HEK293 (cell line): ENCODE measurements at regions of chr17 and their contacts with region 1.

Region 1: GRCh38 chr17:8409966-8410864 is 12.6 kb upstream of the RNF222 start:
- H3K4me3 ChIP-seq: no peak overlapping the region
- H3K27ac ChIP-seq: no peak overlapping the region
- H3K4me1 ChIP-seq: no peaks in the 10 kb centered on the region
- CTCF ChIP-seq: peak; percentile 71

Region 2: DNA sequence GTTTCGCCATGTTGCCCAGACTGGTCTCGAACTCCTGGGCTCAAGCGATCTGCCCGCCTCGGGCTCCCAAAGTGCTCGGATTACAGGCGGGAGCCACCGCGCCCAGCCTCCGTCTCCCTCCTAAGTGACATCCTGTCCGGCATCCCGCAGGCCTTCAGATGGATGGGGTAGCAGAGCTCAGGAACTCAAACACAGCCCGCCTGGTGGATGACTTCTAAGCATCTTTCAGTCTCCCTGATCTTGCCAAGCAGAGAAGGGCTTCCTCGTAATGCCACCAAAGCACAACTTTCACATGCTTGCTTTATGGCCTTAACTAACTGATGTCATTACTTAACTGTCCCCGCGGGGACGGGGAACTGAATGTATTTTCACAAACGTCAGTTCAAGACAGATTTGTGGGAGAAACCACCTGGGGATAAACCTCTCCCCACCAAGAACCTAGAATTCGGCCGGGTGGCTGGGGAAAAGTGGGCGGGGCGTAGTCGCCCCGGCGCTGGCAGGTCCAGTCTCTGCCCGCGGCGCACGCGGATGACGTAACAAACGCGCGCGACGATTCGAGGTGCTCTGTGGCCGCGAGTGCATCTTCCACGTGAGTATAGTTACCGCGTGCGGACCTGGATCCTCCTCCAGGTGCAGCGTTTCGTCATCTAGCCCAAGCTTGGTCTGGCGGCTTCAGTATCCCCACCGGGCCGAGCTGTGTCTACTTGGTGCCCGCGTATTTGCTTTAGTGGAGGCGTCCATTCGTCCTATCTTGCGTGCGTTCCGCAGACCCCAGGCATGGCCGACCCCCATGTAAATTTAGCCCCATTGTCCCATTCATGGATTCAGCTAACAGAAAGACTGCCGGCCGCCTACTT is 161.2 kb before region 1 on chr17 and contains the start of gene PFAS:
- CTCF ChIA-PET with region 1: no interaction called
- POLR2A ChIA-PET with region 1: no interaction called
- H3K4me3 ChIP-seq: peak within 1 kb of the TSS; percentile 77
- H3K27ac ChIP-seq: peak within 1 kb of the TSS; percentile 91
- H3K4me1 ChIP-seq: peaks cover 6% of the 10 kb centered on the region
- CTCF ChIP-seq: no peak

Region 3: GRCh38 chr17:8393420-8394241 is 16.6 kb before region 1 on chr17:
- CTCF ChIA-PET with region 1: interaction called, 12 read pairs
- POLR2A ChIA-PET with region 1: no interaction called
- H3K4me3 ChIP-seq: no peak overlapping the region
- H3K27ac ChIP-seq: no peak overlapping the region
- H3K4me1 ChIP-seq: no peaks in the 10 kb centered on the region
- CTCF ChIP-seq: no peak

Region 4: DNA sequence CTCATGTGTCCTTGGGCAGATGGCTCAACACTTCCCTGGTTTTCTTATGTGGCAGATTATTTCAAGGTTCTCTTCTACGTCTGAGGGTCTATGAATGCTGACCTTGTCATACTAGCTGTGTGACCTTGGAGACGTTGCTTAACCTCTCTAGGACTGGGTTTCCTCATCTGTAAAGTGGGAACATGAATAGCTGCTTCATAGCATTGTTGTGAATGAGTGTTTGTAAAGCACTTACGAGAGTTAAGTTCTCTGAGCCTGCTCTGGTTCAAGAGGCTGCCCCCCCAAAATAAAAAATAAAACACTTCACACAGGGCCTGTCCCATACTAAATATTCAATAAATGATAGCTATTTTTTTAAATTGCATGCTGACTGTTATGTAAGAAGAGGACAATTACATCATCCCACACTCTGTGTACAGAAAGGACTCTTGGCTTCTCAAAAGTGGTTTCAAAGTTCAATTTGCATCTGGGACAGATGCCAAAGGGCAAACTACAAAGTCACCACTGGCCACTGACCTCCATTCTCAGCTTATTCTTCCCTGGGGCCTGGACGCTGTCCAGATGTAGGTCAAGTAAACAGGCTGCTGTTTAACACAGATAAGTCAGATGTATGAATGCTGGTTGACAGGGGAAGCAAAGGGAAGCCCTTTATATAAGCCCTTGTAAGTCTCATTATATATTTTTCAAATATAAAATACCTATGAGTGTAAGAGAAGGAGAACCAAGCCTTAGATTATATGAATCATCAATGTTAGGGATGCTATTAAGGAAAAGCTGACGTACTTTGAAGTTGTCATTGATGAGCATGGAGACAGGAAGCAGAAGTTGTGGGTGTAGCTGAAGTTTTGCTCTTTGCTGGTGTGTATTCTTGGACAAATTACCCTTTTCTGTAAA is 10.1 kb after region 1 on chr17:
- CTCF ChIA-PET with region 1: interaction called, 28 read pairs
- POLR2A ChIA-PET with region 1: no interaction called
- H3K4me3 ChIP-seq: no peak overlapping the region
- H3K27ac ChIP-seq: no peak overlapping the region
- H3K4me1 ChIP-seq: no peaks in the 10 kb centered on the region
- CTCF ChIP-seq: no peak

Region 5: GRCh38 chr17:8435245-8436168 is 25.3 kb after region 1 on chr17 and contains the start of gene NDEL1:
- CTCF ChIA-PET with region 1: interaction called, 12 read pairs
- POLR2A ChIA-PET with region 1: interaction called, 20 read pairs
- H3K4me3 ChIP-seq: peak within 1 kb of the TSS; percentile 90
- H3K27ac ChIP-seq: peak within 1 kb of the TSS; percentile 91
- H3K4me1 ChIP-seq: no peaks in the 10 kb centered on the region
- CTCF ChIP-seq: no peak

Region 6: GRCh38 chr17:8745586-8746500 is 335.6 kb after region 1 on chr17:
- CTCF ChIA-PET with region 1: interaction called, 21 read pairs
- POLR2A ChIA-PET with region 1: no interaction called
- H3K4me3 ChIP-seq: peak overlapping the region; percentile 60
- H3K27ac ChIP-seq: no peak overlapping the region
- H3K4me1 ChIP-seq: no peaks in the 10 kb centered on the region
- CTCF ChIP-seq: peak; percentile 90